ENCODE measurements at regions of chr21 and their contacts with region 1.

Region 1: GRCh38 chr21:26850108-26850643 is 5.0 kb upstream of the ADAMTS1 start:
- DNase-seq: peak in 2 of 4 donors; percentile 14 to 22
- ATAC-seq: no peak
- H3K4me3 ChIP-seq: no peak overlapping the region
- H3K27ac ChIP-seq: no peak overlapping the region
- H3K4me1 ChIP-seq: peaks cover 11% of the 10 kb centered on the region
- H3K27me3 ChIP-seq: no peaks in the 10 kb centered on the region
- CTCF ChIP-seq: peak; percentile 55 to 97 (median 69)
- POLR2A ChIP-seq: no peak

Region 2: DNA sequence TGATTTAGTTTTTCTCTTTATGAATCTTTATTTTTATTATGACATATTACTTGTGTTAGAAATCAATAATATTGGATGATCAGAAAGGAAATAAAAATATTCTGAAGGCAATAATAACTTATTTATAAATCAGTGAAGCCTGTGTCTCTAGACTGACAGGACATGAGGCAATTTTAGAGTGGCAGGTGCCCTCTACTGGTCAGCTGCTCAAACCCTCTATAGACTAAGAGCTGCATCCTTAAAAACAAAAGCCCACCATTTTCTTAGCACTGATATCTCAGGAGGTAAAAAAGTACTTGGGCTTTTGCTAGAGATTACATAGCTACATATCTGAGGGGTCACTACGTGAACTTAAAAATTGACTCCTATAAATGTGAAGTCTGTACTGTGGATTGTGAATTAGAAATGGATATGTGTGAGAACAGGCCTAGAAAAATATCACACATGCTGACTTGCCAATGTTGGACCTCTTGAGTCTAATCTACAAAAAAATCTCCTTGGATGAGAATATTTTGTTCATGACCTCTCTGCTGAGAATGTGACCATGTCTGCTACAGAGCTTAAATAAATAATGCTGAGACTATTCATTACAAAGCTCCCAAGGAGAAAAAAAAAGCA is 714.6 kb after region 1 on chr21:
- intact Hi-C with region 1: loop called (anchors 5 kb)
- DNase-seq: peak; percentile 42 to 70 (median 60)
- ATAC-seq: peak; percentile 60
- H3K4me3 ChIP-seq: no peak overlapping the region
- H3K27ac ChIP-seq: no peak overlapping the region
- H3K4me1 ChIP-seq: no peaks in the 10 kb centered on the region
- H3K27me3 ChIP-seq: no peaks in the 10 kb centered on the region
- CTCF ChIP-seq: peak; percentile 51 to 67 (median 61)
- POLR2A ChIP-seq: no peak

Region 3: DNA sequence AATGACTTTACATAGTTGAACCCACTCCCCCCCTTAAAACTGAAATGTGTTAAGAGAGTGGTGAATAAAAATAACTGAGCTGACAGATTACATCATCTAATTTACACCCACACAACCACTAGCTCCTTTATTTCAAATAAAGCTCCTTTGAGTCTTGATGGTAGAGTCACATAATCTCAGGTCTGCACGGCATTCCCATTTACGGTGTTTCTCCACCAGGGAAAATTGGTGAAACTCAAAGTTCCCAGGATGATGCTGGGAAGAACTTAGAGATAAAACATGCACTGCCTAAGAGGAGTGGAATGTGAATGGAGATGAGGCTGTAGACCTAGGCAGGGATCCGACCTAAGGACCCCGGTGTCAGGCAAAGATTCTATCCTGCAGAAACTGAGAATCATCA is 844.5 kb after region 1 on chr21:
- intact Hi-C with region 1: loop called (anchors 5 kb)
- DNase-seq: no peak
- ATAC-seq: no peak
- H3K4me3 ChIP-seq: no peak overlapping the region
- H3K27ac ChIP-seq: no peak overlapping the region
- H3K4me1 ChIP-seq: no peaks in the 10 kb centered on the region
- H3K27me3 ChIP-seq: no peaks in the 10 kb centered on the region
- CTCF ChIP-seq: no peak
- POLR2A ChIP-seq: no peak

Region 4: DNA sequence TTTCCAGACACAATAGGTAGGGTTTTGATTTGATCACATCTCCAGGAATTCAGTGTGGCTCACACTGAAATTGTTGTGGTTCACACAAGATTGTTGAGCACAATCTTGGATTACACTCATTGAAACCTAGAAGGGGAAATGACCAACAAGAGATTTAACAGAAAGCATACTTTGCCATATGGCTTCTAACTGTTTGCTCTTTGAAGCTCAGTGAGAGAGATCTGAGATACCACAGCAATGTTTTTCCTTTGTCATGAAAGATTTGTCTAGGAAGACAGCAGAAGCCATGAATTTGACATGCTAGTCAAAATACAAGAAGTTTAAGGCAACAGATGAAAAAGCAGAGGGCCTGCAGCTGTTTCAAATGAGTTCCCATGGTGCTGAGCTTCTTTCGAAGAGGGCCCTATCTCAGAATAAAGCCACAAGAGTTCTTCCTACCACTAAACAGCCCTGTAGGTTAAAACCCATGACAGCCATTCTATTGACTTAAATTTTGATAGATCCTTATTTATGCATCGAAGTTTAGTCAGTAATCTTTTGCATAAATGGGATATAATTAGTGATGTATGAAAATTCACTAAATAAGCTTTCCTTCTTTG is 1492.1 kb after region 1 on chr21:
- intact Hi-C with region 1: loop called (anchors 10 kb)
- DNase-seq: no peak
- ATAC-seq: no peak
- H3K4me3 ChIP-seq: no peak overlapping the region
- H3K27ac ChIP-seq: no peak overlapping the region
- H3K4me1 ChIP-seq: peaks cover 12% of the 10 kb centered on the region
- H3K27me3 ChIP-seq: no peaks in the 10 kb centered on the region
- CTCF ChIP-seq: no peak
- POLR2A ChIP-seq: no peak